Calu3 (cell line): ENCODE measurements at regions of chr3 and their contacts with region 1.

Region 1: DNA sequence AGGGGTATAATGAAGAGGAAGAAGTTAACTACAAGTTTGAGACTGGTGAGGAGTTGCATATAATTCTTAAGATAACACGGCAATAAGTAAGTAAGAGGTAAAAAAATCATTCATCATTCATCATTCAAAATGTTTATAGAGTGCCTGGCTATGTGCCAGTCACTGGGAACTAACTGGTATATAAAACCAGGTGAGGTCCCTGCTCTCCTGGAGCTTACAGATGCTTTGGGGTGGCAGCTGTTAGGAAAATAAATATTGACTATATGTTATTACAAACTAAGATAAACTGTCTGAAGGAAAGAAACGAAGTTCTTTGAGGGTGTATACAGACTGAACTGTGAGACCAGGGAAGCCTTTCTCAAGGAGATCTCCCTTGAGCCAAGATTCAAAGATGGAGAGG is 2.9 kb downstream of the CASR start:
- DNase-seq: no peak
- H3K4me3 Mint-ChIP-seq: no peak overlapping the region
- H3K27ac Mint-ChIP-seq: no peak overlapping the region
- H3K4me1 Mint-ChIP-seq: peaks cover 58% of the 10 kb centered on the region
- H3K27me3 Mint-ChIP-seq: peaks cover 24% of the 10 kb centered on the region
- CTCF ChIP-seq: no peak

Region 2: DNA sequence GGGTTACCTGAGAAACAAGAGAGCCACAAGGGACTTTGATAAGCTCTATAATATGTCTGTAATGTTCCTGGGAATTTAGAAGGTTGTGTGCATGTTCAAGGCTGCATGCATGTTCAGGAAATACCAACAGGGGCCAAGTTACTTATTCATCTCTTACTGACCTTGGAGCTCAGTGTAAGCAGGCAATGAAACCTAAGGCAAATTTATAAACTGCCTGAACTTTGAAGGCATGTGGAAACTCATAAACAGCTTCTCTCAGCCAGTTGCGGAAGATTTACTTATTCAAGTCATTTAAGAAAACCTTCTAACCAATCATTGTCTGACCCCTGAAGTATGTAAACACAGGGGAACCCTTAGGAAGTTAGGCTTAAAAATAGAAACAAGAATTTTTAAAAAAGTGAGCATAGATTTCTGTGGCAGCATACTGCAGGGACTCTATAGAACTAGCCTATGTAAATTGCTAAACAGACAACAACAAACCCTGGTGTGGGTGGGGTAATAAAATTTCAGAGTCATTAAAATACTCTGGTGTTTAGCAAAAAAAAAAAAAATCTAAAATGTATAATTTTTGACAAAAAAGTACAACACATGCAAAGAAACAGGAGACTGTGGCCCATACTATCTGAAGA is 235.0 kb before region 1 on chr3:
- CTCF ChIA-PET with region 1: no interaction called
- intact Hi-C with region 1: no loop called
- DNase-seq: no peak
- H3K4me3 Mint-ChIP-seq: no peak overlapping the region
- H3K27ac Mint-ChIP-seq: no peak overlapping the region
- H3K4me1 Mint-ChIP-seq: peaks cover 20% of the 10 kb centered on the region
- H3K27me3 Mint-ChIP-seq: no peaks in the 10 kb centered on the region
- CTCF ChIP-seq: no peak

Region 3: DNA sequence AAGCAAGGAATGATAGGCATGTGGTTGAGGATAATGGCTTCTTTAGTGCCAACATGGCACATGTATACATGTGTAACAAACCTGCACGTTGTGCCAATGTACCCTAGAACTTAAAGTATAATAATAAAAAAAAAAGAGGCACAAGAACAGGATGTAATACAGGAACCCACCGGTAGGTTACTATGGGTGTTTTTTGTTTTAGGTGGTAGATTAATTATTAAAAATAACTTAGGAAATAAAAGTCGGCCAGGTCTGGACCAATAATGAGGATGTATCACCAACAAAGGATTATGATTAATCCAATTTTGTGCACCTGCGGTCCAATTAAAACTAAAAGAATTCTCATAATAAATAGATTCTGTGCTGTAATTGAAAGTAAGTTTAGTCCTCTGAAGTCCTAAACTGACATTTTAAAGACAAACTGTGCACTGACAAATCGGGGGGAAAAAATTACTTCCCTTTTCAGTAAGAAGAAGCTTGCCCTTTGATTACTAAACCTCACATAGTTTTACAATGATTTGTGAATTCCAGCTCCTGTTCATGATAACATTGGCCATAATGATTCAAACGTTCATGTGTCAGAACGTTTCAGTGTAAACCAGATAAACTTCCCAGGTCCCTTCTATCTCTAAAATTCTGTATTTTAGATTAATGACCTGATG is 59.3 kb after region 1 on chr3:
- CTCF ChIA-PET with region 1: no interaction called
- intact Hi-C with region 1: loop called (anchors 5 kb)
- DNase-seq: peak; percentile 25
- H3K4me3 Mint-ChIP-seq: no peak overlapping the region
- H3K27ac Mint-ChIP-seq: no peak overlapping the region
- H3K4me1 Mint-ChIP-seq: peaks cover 12% of the 10 kb centered on the region
- H3K27me3 Mint-ChIP-seq: no peaks in the 10 kb centered on the region
- CTCF ChIP-seq: no peak